Thyroid gland (tissue), 4 donors: ENCODE measurements at regions of chr3 and their contacts with region 1.

Region 1: DNA sequence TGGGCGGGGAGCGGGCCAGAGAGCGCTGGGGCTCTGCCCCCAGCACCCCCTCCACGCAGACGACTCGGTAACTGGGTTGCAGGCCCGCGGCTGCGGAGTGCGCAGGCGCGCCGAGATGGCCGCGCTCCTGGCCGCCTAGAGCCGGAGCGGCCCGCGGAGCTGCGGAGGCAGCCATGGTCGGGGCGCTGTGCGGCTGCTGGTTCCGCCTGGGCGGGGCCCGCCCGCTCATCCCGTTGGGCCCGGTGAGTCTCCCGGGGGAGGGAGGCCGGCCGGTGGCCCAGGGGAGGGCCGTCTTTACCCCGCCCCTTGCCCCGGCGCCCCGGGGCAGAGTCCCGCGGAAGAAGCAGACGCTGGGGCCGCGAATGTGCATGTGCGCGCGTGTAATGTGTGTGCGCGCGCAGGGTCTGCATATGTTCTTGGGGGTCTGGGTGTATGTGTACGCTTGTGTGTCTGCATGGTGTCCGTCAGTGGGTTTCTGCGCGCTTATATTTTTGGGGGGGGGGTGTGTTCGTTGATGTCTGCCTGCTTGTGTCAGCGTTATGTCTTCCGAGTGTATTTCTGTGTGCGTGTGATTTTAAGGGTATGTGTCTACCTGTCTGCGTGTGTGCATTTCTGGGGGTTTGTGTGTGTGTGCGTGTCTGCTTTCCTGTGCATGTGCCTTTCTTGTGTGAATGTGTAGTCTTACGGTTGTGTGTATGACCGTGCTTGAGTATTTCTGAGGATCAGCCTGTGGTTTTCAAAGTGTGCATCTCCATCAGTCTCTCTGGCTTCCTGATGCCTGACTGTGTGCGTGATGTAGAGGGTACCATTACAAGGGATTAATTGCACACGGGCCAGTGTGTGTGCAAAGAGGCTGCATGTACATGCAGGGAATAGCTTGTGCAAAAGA is at the start of gene ABHD14A:
- DNase-seq: peak; percentile 60 to 68
- H3K4me3 ChIP-seq: peak within 1 kb of the TSS; percentile 6 to 46 (median 35)
- H3K27ac ChIP-seq: peak within 1 kb of the TSS; percentile 83 to 93 (median 86)
- H3K4me1 ChIP-seq: peaks cover 16 to 29% of the 10 kb centered on the region in 2 donors
- H3K27me3 ChIP-seq: no peaks in the 10 kb centered on the region
- CTCF ChIP-seq: no peak
- POLR2A ChIP-seq: peak in 1 of 2 donors; percentile 80
- total RNA-seq, gene ABHD14A: 20.0 to 91.9 (median 49.3) TPM

Region 2: DNA sequence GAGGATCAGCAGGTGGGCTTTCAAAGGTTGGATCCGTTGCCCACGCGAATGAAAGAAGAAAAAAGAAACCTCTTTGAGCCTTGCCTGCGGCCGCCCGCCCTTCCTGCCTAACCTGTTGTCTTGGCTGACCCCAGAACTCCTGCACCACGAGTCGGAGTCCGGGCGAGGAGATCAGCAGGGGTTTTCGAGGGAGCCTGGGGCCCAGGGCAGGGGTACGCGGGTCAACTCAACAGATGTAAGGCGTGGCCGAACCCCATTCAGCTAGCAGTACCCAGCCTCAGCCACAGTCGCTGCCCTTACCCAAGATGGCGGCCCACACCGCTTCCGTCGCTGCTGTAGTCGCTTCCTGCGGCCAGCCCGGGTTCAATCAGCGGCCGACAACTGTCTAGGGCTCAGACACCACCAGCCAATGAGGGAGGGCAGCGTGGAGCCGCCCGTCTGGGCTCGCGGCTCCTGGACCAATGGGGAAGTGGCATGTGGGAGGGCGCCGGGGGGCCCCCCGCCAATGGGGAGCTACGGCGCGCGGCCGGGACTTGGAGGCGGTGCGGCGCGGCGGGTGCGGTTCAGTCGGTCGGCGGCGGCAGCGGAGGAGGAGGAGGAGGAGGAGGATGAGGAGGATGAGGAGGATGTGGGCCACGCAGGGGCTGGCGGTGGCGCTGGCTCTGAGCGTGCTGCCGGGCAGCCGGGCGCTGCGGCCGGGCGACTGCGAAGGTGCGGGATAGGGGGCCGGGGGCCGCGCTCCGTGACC is 590.3 kb before region 1 on chr3 and contains the start of gene MANF:
- intact Hi-C with region 1: loop called (anchors 10 kb)
- DNase-seq: peak; percentile 99
- H3K4me3 ChIP-seq: peak within 1 kb of the TSS; percentile 71 to 81 (median 71)
- H3K27ac ChIP-seq: peak within 1 kb of the TSS; percentile 87 to 96 (median 90)
- H3K4me1 ChIP-seq: peaks cover 29 to 51% of the 10 kb centered on the region in 2 donors
- H3K27me3 ChIP-seq: no peaks in the 10 kb centered on the region
- CTCF ChIP-seq: peak in 4 of 6 experiments; percentile 8 to 34 (median 23)
- POLR2A ChIP-seq: peak in 1 of 2 donors; percentile 94
- total RNA-seq, gene MANF: 79.7 to 312 (median 189) TPM

Region 3: DNA sequence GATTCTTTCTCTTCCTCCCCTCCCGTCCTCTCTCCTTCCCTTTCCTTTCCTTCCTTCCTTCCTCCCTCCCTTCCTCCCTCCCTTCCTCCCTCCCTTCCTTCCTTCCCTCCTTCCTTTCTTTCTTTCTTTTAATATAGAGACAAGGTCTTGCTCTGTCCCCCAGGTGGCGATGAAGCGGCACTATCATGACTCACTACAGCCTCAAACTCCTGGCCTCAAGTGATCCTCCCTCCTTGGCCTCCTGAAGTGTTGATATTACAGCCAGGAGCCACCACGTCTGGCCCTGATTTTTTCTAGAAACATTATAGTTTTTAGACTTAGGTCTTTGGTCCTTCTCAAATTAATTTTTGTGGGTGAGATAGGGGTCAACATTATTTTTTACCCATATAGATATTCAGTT is 252.8 kb before region 1 on chr3:
- intact Hi-C with region 1: no loop called
- DNase-seq: no peak
- H3K4me3 ChIP-seq: no peak overlapping the region
- H3K27ac ChIP-seq: no peak overlapping the region
- H3K4me1 ChIP-seq: no peaks in the 10 kb centered on the region
- H3K27me3 ChIP-seq: no peaks in the 10 kb centered on the region
- CTCF ChIP-seq: no peak
- POLR2A ChIP-seq: no peak

Region 4: GRCh38 chr3:51941798-51942602 is 33.2 kb before region 1 on chr3 and contains the starts of genes PARP3 and RRP9:
- intact Hi-C with region 1: loop called (anchors 5 kb)
- DNase-seq: peak; percentile 100
- H3K4me3 ChIP-seq: peak within 1 kb of the TSS; percentile 32 to 51 (median 39)
- H3K27ac ChIP-seq: peak within 1 kb of the TSS; percentile 81 to 96 (median 90)
- H3K4me1 ChIP-seq: peaks cover 23 to 24% of the 10 kb centered on the region in 2 donors
- H3K27me3 ChIP-seq: no peaks in the 10 kb centered on the region
- CTCF ChIP-seq: peak; percentile 97 to 100 (median 100)
- POLR2A ChIP-seq: peak; percentile 61 to 84
- total RNA-seq, gene PARP3: 32.1 to 50.8 (median 47.1) TPM
- total RNA-seq, gene RRP9: 7.3 to 14.4 (median 11.9) TPM